ENCODE measurements at regions of chr3 and their contacts with region 1.

Region 1: GRCh38 chr3:187738331-187739093 is 6.8 kb downstream of the BCL6 start:
- DNase-seq: peak; percentile 73 to 80 (median 80)
- H3K4me3 ChIP-seq: peak overlapping the region; percentile 70 to 99 (median 86)
- H3K27ac ChIP-seq: no peak overlapping the region
- H3K4me1 ChIP-seq: peaks cover 19 to 72% (median 63%) of the 10 kb centered on the region in 4 experiments
- H3K27me3 ChIP-seq: peaks cover 0 to 6% (median 1%) of the 10 kb centered on the region in 5 experiments

Region 2: DNA sequence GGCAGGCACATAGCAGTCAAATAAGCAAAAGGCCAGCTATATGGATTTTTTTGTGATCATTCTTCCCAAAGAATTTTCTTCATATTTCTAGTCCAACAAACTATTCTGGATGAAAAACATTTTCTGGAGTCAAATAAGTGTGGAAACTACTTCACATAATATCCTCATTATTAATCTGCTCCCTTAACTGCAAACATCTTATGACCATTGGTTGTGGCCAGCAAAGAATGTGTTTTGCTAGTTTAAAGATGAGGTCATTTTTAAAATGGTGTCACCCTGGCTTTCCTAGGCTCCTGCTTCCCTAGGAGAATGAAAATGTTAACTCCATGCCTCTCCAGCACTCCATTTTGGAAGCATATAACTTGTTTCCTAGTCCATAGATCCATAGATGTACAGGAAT is 187.1 kb before region 1 on chr3:
- CTCF ChIA-PET with region 1: no interaction called
- POLR2A ChIA-PET with region 1: no interaction called
- DNase-seq: no peak
- H3K4me3 ChIP-seq: no peak overlapping the region
- H3K27ac ChIP-seq: no peak overlapping the region
- H3K4me1 ChIP-seq: no peaks in the 10 kb centered on the region
- H3K27me3 ChIP-seq: no peaks in the 10 kb centered on the region

Region 3: GRCh38 chr3:188792793-188793192 is 1054.3 kb after region 1 on chr3:
- CTCF ChIA-PET with region 1: interaction called, 14 read pairs
- POLR2A ChIA-PET with region 1: no interaction called
- DNase-seq: peak; percentile 26 to 56 (median 49)
- H3K4me3 ChIP-seq: no peak overlapping the region
- H3K27ac ChIP-seq: no peak overlapping the region
- H3K4me1 ChIP-seq: no peaks in the 10 kb centered on the region
- H3K27me3 ChIP-seq: no peaks in the 10 kb centered on the region

Region 4: GRCh38 chr3:188946351-188947240 is 1208.1 kb after region 1 on chr3:
- CTCF ChIA-PET with region 1: interaction called, 332 read pairs
- POLR2A ChIA-PET with region 1: no interaction called
- DNase-seq: no peak
- H3K4me3 ChIP-seq: no peak overlapping the region
- H3K27ac ChIP-seq: no peak overlapping the region
- H3K4me1 ChIP-seq: peaks cover 2 to 20% (median 12%) of the 10 kb centered on the region in 4 experiments
- H3K27me3 ChIP-seq: peaks cover 0 to 20% (median 0%) of the 10 kb centered on the region in 5 experiments

Region 5: GRCh38 chr3:189041482-189042090 is 1303.1 kb after region 1 on chr3:
- CTCF ChIA-PET with region 1: interaction called, 36 read pairs
- POLR2A ChIA-PET with region 1: no interaction called
- DNase-seq: peak; percentile 69 to 86 (median 84)
- H3K4me3 ChIP-seq: no peak overlapping the region
- H3K27ac ChIP-seq: no peak overlapping the region
- H3K4me1 ChIP-seq: no peaks in the 10 kb centered on the region
- H3K27me3 ChIP-seq: no peaks in the 10 kb centered on the region

Region 6: GRCh38 chr3:189139611-189139940 is 1401.1 kb after region 1 on chr3:
- CTCF ChIA-PET with region 1: interaction called, 42 read pairs
- POLR2A ChIA-PET with region 1: interaction called, 3 read pairs
- DNase-seq: no peak
- H3K4me3 ChIP-seq: no peak overlapping the region
- H3K27ac ChIP-seq: no peak overlapping the region
- H3K4me1 ChIP-seq: peaks cover 0 to 5% (median 2%) of the 10 kb centered on the region in 4 experiments
- H3K27me3 ChIP-seq: peaks cover 0 to 20% (median 8%) of the 10 kb centered on the region in 5 experiments

Region 7: DNA sequence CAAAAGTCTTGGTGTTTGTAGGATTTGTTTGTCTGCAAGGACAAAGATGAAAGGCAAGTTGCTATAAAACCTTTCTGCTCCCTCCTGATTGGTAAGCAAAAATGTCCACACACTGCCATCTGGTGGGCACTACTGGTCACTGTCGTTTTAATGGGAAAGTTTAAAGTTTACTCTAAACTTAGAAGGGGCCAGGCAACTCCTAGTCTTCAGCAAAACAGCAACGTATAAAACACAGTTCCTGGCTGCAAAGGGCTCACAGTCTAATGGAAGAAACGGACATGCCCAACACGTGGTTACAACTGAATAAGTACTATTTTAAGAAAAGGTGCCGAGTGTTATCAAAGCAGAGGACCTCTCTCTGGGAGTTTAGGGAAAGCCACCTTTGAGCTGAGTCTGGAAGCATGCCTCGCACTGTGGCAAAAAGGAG is 1409.6 kb after region 1 on chr3:
- CTCF ChIA-PET with region 1: interaction called, 42 read pairs
- POLR2A ChIA-PET with region 1: interaction called, 3 read pairs
- DNase-seq: peak; percentile 57 to 77 (median 70)
- H3K4me3 ChIP-seq: no peak overlapping the region
- H3K27ac ChIP-seq: no peak overlapping the region
- H3K4me1 ChIP-seq: peaks cover 0 to 5% (median 2%) of the 10 kb centered on the region in 4 experiments
- H3K27me3 ChIP-seq: peaks cover 0 to 5% (median 0%) of the 10 kb centered on the region in 5 experiments

Measured in common myeloid progenitor, CD34-positive (primary cell).